Esophagus muscularis mucosa (tissue), 4 donors: ENCODE measurements at regions of chr12 and their contacts with region 1.

Region 1: GRCh38 chr12:53159195-53159839 is 21.2 kb upstream of the ZNF740 start:
- DNase-seq: peak; percentile 97
- H3K4me3 ChIP-seq: no peak overlapping the region
- H3K27ac ChIP-seq: peak overlapping the region; percentile 54 to 78 (median 72)
- H3K4me1 ChIP-seq: peaks cover 4 to 51% (median 37%) of the 10 kb centered on the region in 4 donors
- H3K27me3 ChIP-seq: no peaks in the 10 kb centered on the region
- CTCF ChIP-seq: peak in 2 of 3 experiments; percentile 93 to 99
- EP300 ChIP-seq: no peak
- POLR2A ChIP-seq: no peak

Region 2: DNA sequence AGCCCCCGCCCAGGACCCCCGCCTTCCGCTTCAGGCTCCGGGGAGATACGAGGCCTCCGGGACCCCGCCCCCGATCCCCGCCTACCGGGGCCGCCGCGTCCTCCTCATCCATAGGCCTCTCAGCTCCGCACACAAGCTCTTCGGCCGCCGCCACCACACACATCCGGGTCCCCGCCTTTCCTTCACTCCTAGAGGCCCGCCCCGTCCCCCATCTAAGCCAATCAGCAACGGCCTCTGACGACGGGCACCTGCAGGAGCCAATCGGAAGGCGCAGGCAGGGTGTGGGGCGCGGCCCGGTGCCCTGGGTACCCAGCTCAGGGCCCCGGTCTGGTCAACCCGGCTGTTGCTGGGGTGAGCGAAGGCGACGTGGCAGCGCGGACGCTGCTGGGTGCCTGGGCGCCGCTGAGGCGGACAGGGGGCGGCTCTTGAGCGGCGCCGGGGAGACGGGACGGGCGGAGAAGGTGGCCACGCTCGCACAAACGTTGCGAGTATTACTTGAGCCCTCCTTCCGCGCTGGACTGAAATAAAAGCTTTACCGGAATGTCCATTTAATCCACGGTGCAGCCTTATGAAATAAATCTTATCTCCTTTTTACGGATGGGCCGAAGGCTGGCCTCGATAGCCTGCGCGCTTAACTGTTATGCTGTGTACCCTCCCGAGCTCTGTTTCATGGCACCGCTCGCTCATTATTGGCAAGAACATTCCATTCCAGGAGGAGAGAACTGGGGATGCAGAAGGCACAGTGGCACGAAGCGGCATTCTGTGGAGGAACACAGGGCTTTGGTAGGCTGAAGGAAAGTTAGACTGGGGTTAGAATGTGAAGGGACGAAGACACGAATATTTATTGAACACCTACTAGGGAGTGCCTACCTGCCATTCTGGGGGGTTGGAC is 79.8 kb before region 1 on chr12 and contains the start of gene SPRYD3:
- intact Hi-C with region 1: loop called (anchors 10 kb)
- DNase-seq: peak; percentile 100
- H3K4me3 ChIP-seq: peak within 1 kb of the TSS; percentile 66 to 78 (median 72)
- H3K27ac ChIP-seq: peak within 1 kb of the TSS; percentile 91 to 96 (median 94)
- H3K4me1 ChIP-seq: peaks cover 23 to 61% (median 59%) of the 10 kb centered on the region in 4 donors
- H3K27me3 ChIP-seq: no peaks in the 10 kb centered on the region
- CTCF ChIP-seq: no peak
- EP300 ChIP-seq: no peak
- POLR2A ChIP-seq: peak; percentile 72
- total RNA-seq, gene SPRYD3: 79.7 to 125 (median 99.1) TPM

Region 3: DNA sequence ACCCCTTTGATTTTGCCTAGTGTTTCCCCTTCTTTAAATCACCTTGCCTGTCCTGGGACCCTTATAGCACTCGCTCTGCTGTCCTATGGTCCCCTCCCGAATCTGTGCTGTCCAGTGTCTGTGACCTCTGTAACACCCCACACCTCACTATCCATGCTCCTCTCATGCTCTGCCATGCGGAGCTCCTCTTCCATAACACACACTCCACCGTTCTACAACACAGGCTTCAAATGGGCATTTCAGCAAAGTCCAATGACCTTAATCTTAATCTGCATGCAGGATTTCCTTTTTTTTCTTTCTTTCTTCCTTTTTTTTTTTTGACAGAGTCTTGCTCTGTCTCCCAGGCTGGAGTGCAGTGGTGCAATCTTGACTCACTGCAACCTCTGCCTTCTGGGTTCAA is 30.1 kb before region 1 on chr12:
- intact Hi-C with region 1: no loop called
- DNase-seq: peak; percentile 53
- H3K4me3 ChIP-seq: no peak overlapping the region
- H3K27ac ChIP-seq: no peak overlapping the region
- H3K4me1 ChIP-seq: no peaks in the 10 kb centered on the region
- H3K27me3 ChIP-seq: no peaks in the 10 kb centered on the region
- CTCF ChIP-seq: no peak
- EP300 ChIP-seq: no peak
- POLR2A ChIP-seq: no peak

Region 4: DNA sequence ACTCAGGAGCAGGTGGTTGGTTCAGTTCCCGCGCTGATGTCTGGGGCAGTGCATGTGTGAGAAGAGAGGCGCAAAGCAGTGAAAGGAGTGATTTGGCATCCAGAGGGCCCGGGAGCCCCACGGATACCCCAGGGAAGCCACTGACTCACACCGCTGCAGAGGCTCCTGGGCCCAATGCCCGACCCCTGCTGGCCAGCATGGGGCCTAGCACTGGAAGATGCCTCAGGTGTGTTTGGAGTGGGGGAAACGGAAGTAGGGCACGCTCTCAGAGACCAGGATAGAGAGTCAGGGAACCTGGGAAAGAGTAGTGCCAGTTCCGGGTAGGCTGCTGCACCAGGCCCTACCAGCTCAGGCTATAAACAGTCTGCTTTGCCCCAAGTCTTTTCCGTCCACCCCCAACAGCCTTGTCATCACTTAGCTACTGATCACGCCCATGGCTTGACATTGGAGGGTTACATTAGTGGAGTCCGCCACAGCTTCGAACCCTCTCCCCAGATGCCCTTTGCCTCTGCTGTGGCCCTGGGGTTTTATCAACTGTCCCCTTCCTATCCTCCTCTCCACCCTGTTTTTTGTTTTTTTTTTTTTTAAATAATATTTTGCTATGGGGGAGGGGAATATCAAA is 30.9 kb after region 1 on chr12:
- intact Hi-C with region 1: loop called (anchors 2 kb)
- DNase-seq: no peak
- H3K4me3 ChIP-seq: no peak overlapping the region
- H3K27ac ChIP-seq: peak overlapping the region; percentile 37 to 65 (median 56)
- H3K4me1 ChIP-seq: peaks cover 0 to 17% (median 14%) of the 10 kb centered on the region in 4 donors
- H3K27me3 ChIP-seq: no peaks in the 10 kb centered on the region
- CTCF ChIP-seq: peak; percentile 77 to 87 (median 82)
- EP300 ChIP-seq: no peak
- POLR2A ChIP-seq: no peak

Region 5: DNA sequence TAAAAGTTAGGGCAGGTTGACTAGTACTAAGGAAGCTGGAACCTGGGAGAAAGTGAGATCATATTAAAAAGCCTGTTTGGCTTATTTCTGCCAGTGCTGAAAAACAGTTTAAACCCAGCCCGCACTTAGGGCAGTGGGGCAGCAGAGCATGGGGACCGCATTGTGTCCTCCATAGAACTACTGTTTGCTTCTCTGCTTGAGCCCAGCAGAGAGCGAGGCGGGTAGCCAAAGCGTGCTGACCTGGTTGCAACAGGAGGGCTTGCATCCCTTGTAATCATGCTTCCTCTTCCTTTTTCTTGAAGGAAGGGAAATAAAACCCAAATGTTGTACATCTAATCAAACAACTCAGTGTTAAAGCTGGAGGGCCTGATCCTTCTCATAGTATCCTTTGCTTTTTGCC is 696.8 kb after region 1 on chr12:
- intact Hi-C with region 1: no loop called
- DNase-seq: peak; percentile 8
- H3K4me3 ChIP-seq: no peak overlapping the region
- H3K27ac ChIP-seq: no peak overlapping the region
- H3K4me1 ChIP-seq: no peaks in the 10 kb centered on the region
- H3K27me3 ChIP-seq: peaks cover 0 to 32% (median 0%) of the 10 kb centered on the region in 4 donors
- CTCF ChIP-seq: no peak
- EP300 ChIP-seq: no peak
- POLR2A ChIP-seq: no peak